ENCODE measurements at regions of chr9 and their contacts with region 1.

Region 1: GRCh38 chr9:112333639-112334431 is 416 bp upstream of the PTBP3 start:
- DNase-seq: peak; percentile 93
- ATAC-seq: peak; percentile 74
- H3K4me3 ChIP-seq: peak overlapping the region; percentile 98
- H3K27ac ChIP-seq: peak overlapping the region; percentile 82
- H3K4me1 ChIP-seq: peaks cover 22% of the 10 kb centered on the region
- H3K27me3 ChIP-seq: no peaks in the 10 kb centered on the region
- CTCF ChIP-seq: peak; percentile 44

Region 2: GRCh38 chr9:112097712-112098688 is 235.8 kb before region 1 on chr9:
- CTCF ChIA-PET with region 1: interaction called, 4 read pairs
- POLR2A ChIA-PET with region 1: no interaction called
- intact Hi-C with region 1: loop called (anchors 2 kb)
- DNase-seq: peak; percentile 75
- ATAC-seq: peak; percentile 89
- H3K4me3 ChIP-seq: no peak overlapping the region
- H3K27ac ChIP-seq: no peak overlapping the region
- H3K4me1 ChIP-seq: no peaks in the 10 kb centered on the region
- H3K27me3 ChIP-seq: no peaks in the 10 kb centered on the region
- CTCF ChIP-seq: peak; percentile 81

Region 3: DNA sequence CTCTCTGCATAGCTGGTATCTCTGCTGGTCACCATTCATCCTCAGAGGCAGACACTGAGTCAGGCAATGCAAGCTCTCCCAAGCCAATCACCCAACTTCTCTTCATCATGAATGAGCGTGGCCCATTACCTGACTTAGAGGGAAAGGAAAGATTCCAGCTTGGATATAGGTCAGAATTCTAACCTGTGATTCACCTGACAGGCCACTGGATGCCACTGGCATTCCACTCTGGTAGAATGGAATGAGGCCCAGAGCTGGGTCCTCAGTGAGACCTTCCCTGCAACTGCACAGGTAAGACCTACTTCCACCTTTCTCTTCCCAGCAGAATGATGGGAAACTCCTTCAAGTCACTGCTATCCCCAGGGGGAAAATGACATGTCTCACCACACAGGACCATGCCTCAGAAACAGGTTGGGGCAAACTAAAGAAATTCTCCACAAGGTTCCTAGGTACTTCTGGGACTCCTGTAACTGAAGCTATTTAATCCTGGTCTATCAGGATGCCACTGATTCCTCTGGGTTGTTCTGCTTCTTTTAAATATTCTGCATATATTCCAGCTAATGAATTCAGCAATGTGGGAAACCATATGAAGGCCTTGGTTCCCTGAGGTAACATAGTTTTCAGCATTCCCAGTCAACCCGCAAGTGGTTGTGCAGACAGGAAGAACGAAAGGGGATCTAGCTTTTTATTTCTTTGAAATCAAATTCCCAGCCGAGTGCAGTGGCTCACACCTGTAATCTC is 220.7 kb before region 1 on chr9:
- CTCF ChIA-PET with region 1: no interaction called
- POLR2A ChIA-PET with region 1: interaction called, 12 read pairs
- intact Hi-C with region 1: loop called (anchors 2 kb)
- DNase-seq: peak; percentile 84
- ATAC-seq: peak; percentile 82
- H3K4me3 ChIP-seq: peak overlapping the region; percentile 33; the same call in 1 of the 2 replicates
- H3K27ac ChIP-seq: peak overlapping the region; percentile 100
- H3K4me1 ChIP-seq: peaks cover 43% of the 10 kb centered on the region
- H3K27me3 ChIP-seq: no peaks in the 10 kb centered on the region
- CTCF ChIP-seq: peak; percentile 73

Region 4: GRCh38 chr9:112166172-112167140 is 167.4 kb before region 1 on chr9:
- CTCF ChIA-PET with region 1: no interaction called
- POLR2A ChIA-PET with region 1: no interaction called
- intact Hi-C with region 1: loop called (anchors 2 kb)
- DNase-seq: peak; percentile 85
- ATAC-seq: peak; percentile 91
- H3K4me3 ChIP-seq: no peak overlapping the region
- H3K27ac ChIP-seq: peak overlapping the region; percentile 62
- H3K4me1 ChIP-seq: peaks cover 50% of the 10 kb centered on the region
- H3K27me3 ChIP-seq: no peaks in the 10 kb centered on the region
- CTCF ChIP-seq: peak; percentile 56

Region 5: GRCh38 chr9:112249277-112249676 is 84.6 kb before region 1 on chr9:
- CTCF ChIA-PET with region 1: interaction called, 3 read pairs
- POLR2A ChIA-PET with region 1: no interaction called
- intact Hi-C with region 1: loop called (anchors 2 kb)
- DNase-seq: peak; percentile 62
- ATAC-seq: peak; percentile 86
- H3K4me3 ChIP-seq: peak overlapping the region; percentile 43; the same call in 1 of the 2 replicates
- H3K27ac ChIP-seq: peak overlapping the region; percentile 96
- H3K4me1 ChIP-seq: peaks cover 57% of the 10 kb centered on the region
- H3K27me3 ChIP-seq: no peaks in the 10 kb centered on the region
- CTCF ChIP-seq: no peak